ENCODE measurements at regions of chr1 and their contacts with region 1.

Region 1: DNA sequence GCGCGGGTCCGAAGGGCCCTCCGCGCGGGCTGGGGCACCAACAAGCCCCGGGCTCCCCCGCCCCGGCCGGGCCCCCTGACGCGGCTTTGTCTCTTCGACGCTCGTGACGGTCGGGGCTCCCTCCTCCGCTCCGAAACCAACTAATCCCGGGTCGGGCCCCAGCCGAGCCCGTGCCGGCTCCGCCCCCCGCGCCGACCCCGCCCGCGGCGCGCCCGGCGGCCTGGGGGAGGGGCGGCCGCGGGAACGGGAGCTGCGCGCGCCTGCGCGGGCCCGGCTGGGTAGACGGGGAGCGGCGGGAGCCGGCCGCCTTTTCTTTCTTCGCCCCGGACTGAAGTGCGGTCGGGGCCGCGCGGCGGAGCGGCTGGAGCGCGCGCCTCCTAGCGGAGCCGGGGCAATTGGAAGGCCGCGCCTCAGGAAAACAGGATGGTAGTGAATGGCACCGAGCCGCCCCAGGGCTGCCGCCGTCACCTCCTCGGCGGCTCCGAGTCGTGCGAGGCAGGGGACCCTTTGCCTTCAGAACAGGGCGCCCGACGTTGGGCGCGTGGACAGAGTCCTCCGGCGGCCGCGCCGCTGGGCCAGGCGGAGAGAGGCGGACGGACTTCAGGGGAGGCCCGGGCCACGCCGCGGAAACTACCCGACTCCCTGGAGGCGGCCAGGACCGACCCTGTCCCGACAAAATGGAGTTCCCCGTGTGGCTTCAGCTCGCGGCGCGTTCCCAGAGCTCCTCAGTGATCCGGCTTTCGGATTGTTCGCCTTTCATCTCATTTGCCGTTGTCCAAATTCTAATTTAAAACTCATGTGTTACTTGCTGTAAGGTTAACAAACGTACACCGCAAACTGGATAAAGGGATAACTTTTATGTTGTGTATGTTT is at the start of gene TP53BP2:
- DNase-seq: peak; percentile 91
- ATAC-seq: peak; percentile 75
- H3K4me3 Mint-ChIP-seq: peak within 1 kb of the TSS; percentile 96
- H3K27ac Mint-ChIP-seq: peak within 1 kb of the TSS; percentile 99
- H3K4me1 Mint-ChIP-seq: peaks cover 44% of the 10 kb centered on the region
- H3K27me3 Mint-ChIP-seq: no peaks in the 10 kb centered on the region
- total RNA-seq, gene TP53BP2: 46.6 to 56.2 TPM

Region 2: DNA sequence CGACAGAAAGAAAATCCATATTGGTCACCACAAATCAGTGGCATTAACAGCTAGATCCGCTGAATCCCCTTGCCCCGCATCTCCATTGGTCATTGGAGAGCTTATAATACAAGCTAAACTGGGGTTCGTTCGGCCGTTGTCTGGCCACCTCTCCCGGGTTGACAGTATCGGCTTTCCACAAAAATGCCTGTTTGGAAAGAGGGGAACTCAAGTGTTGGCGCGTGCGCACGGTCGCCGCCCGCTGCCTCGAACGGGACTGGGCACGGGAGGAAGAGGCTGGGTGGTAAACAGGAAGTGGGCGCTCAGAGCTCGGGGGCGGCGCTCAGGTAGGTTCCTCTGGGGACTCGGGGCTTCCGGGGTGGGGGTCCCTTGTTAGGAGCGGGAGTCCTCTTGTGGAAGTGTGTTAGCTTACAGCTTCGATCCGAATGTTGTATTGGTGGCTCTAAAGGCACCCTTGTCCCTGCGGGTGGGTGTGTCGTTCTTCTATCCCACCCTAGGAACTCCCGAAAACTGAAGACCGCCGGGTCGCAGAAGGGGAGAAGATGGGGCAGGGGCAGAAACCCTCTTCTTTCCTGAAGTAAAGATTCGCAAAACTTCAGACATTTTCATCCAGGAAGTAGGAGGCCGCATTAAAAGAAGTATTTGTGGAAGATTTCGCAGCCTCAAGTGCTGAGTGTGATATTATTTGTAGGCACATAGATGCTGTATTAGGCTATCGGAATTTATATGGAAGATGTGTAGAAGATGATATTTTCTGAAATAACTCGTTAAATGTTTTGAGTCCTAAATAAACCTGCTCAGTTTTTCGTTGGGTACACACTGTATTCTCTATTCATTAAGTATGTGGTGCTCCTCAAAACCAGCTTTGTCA is 1132.7 kb before region 1 on chr1:
- CTCF ChIA-PET with region 1: no interaction called
- POLR2A ChIA-PET with region 1: no interaction called
- intact Hi-C with region 1: loop called in 1 of 2 experiments (anchors 1 kb)
- DNase-seq: peak; percentile 92
- ATAC-seq: peak; percentile 68
- H3K4me3 Mint-ChIP-seq: peak overlapping the region; percentile 98
- H3K27ac Mint-ChIP-seq: peak overlapping the region; percentile 100
- H3K4me1 Mint-ChIP-seq: peaks cover 37% of the 10 kb centered on the region
- H3K27me3 Mint-ChIP-seq: no peaks in the 10 kb centered on the region

Region 3: GRCh38 chr1:223363856-223364684 is 482.0 kb before region 1 on chr1 and contains the start of gene SUSD4:
- CTCF ChIA-PET with region 1: no interaction called
- POLR2A ChIA-PET with region 1: no interaction called
- intact Hi-C with region 1: loop called in 1 of 2 experiments (anchors 2 kb)
- DNase-seq: peak; percentile 82
- ATAC-seq: peak; percentile 90
- H3K4me3 Mint-ChIP-seq: peak within 1 kb of the TSS; percentile 80
- H3K27ac Mint-ChIP-seq: peak within 1 kb of the TSS; percentile 37
- H3K4me1 Mint-ChIP-seq: peaks cover 18% of the 10 kb centered on the region
- H3K27me3 Mint-ChIP-seq: peaks cover 11% of the 10 kb centered on the region
- total RNA-seq, gene SUSD4: 1.9 to 2.2 TPM

Region 4: DNA sequence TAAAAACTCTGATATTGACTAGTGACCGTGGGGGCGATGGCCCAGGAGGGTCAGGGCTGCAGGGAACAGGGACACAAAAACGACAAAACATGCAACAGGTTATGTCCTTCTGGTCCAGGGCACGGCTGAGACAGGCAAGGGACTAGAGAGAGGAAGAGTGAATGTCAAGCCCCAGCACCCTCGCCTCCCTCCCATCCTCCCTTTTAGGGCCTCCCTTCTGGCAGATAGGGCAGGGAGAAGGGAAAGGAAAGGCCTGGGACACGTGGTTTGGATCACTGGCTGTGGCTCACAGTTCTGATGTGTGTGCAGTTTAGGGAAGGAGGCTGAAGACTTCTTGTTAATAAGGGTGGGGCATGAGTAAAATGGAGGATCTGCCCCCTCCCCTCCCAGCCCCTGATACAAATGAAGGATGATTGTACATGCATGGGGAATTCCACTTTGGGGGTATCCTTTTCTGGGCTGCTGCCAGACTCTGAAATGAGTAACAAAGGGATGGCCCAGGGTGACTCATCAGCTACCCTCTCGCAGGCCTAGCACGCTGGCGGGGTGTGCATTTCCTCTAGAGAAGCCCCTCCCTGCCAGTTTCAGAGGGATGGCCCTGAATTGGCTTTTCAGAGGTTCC is 119.6 kb before region 1 on chr1:
- CTCF ChIA-PET with region 1: no interaction called
- POLR2A ChIA-PET with region 1: no interaction called
- intact Hi-C with region 1: loop called in 1 of 2 experiments (anchors 1 kb)
- DNase-seq: peak; percentile 94
- ATAC-seq: peak; percentile 98
- H3K4me3 Mint-ChIP-seq: peak overlapping the region; percentile 44
- H3K27ac Mint-ChIP-seq: peak overlapping the region; percentile 87
- H3K4me1 Mint-ChIP-seq: peaks cover 63% of the 10 kb centered on the region
- H3K27me3 Mint-ChIP-seq: no peaks in the 10 kb centered on the region

Region 5: DNA sequence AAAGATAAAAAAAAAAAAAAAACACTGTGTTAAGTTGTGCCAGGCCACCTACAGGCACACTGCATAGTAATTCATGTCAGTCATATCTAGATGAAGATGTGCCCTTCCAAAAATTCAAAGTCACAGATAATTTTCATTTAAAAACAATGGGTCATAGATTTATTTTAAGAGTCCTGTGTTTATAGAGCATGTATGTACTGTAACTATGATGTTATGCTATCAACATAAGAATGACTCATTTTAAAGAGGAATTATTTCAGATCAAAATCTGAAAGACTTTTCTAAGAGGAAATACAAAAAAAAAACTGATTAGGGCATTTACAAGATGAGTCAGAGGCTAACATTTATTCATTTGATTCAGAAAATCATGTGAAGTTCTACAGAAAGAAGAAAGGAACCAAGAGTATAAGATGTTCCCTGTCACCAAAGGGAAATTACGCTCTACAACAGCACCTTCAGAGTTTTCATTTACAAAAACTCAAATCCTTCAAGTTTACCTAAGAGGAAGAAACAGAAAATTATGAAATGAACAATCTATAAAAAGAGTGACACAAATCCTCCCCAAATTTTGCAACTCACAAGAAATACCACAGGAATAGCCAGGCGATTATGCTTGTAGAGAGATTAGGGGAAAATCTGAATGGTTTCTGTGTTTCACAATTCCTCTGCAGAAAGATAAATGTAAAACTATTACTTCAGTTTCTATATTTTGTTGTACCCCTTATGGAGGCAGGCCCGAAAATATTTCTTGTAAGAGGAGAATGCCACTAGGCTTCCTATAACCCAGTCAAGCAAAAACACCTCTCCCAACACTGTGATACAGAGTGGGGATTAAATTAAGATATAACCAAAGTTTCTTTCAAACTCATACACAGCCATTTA is 14.1 kb before region 1 on chr1:
- CTCF ChIA-PET with region 1: interaction called, 22 read pairs
- POLR2A ChIA-PET with region 1: interaction called, 22 read pairs
- intact Hi-C with region 1: loop called (anchors 1 kb)
- DNase-seq: no peak
- ATAC-seq: peak; percentile 71
- H3K4me3 Mint-ChIP-seq: no peak overlapping the region
- H3K27ac Mint-ChIP-seq: no peak overlapping the region
- H3K4me1 Mint-ChIP-seq: peaks cover 29% of the 10 kb centered on the region
- H3K27me3 Mint-ChIP-seq: no peaks in the 10 kb centered on the region

Region 6: GRCh38 chr1:224329842-224330753 is 484.1 kb after region 1 on chr1 and contains the start of gene NVL:
- CTCF ChIA-PET with region 1: no interaction called
- POLR2A ChIA-PET with region 1: no interaction called
- intact Hi-C with region 1: loop called in 1 of 2 experiments (anchors 2 kb)
- DNase-seq: peak; percentile 89
- ATAC-seq: peak; percentile 81
- H3K4me3 Mint-ChIP-seq: peak within 1 kb of the TSS; percentile 88
- H3K27ac Mint-ChIP-seq: peak within 1 kb of the TSS; percentile 92
- H3K4me1 Mint-ChIP-seq: peaks cover 36% of the 10 kb centered on the region
- H3K27me3 Mint-ChIP-seq: no peaks in the 10 kb centered on the region
- total RNA-seq, gene NVL: 34.2 to 44.1 TPM

Region 7: GRCh38 chr1:224434691-224435317 is 588.8 kb after region 1 on chr1 and contains the start of gene WDR26:
- CTCF ChIA-PET with region 1: no interaction called
- POLR2A ChIA-PET with region 1: no interaction called
- intact Hi-C with region 1: loop called in 1 of 2 experiments (anchors 5 kb)
- DNase-seq: peak; percentile 92
- ATAC-seq: peak; percentile 85
- H3K4me3 Mint-ChIP-seq: peak within 1 kb of the TSS; percentile 81
- H3K27ac Mint-ChIP-seq: peak within 1 kb of the TSS; percentile 97
- H3K4me1 Mint-ChIP-seq: peaks cover 52% of the 10 kb centered on the region
- H3K27me3 Mint-ChIP-seq: no peaks in the 10 kb centered on the region
- total RNA-seq, gene WDR26: 74.0 to 75.6 TPM

Measured in activated CD4-positive, alpha-beta T cell treated with anti-CD3 and anti-CD28 coated beads for 36 hours (primary cell).